MCF 10A (cell line): ENCODE measurements at regions of chr20 and their contacts with region 1.

Region 1: GRCh38 chr20:5448449-5449118 is 131.8 kb upstream of the PROKR2 start:
- DNase-seq: peak; percentile 64
- H3K4me3 Mint-ChIP-seq: no peak overlapping the region
- H3K27ac Mint-ChIP-seq: no peak overlapping the region
- H3K4me1 Mint-ChIP-seq: no peaks in the 10 kb centered on the region
- H3K27me3 Mint-ChIP-seq: peaks cover 62% of the 10 kb centered on the region
- CTCF ChIP-seq: peak; percentile 68

Region 2: GRCh38 chr20:4844751-4845465 is 603.7 kb before region 1 on chr20:
- CTCF ChIA-PET with region 1: no interaction called
- POLR2A ChIA-PET with region 1: no interaction called
- intact Hi-C with region 1: no loop called
- DNase-seq: no peak
- H3K4me3 Mint-ChIP-seq: no peak overlapping the region
- H3K27ac Mint-ChIP-seq: no peak overlapping the region
- H3K4me1 Mint-ChIP-seq: no peaks in the 10 kb centered on the region
- H3K27me3 Mint-ChIP-seq: no peaks in the 10 kb centered on the region
- CTCF ChIP-seq: no peak

Region 3: DNA sequence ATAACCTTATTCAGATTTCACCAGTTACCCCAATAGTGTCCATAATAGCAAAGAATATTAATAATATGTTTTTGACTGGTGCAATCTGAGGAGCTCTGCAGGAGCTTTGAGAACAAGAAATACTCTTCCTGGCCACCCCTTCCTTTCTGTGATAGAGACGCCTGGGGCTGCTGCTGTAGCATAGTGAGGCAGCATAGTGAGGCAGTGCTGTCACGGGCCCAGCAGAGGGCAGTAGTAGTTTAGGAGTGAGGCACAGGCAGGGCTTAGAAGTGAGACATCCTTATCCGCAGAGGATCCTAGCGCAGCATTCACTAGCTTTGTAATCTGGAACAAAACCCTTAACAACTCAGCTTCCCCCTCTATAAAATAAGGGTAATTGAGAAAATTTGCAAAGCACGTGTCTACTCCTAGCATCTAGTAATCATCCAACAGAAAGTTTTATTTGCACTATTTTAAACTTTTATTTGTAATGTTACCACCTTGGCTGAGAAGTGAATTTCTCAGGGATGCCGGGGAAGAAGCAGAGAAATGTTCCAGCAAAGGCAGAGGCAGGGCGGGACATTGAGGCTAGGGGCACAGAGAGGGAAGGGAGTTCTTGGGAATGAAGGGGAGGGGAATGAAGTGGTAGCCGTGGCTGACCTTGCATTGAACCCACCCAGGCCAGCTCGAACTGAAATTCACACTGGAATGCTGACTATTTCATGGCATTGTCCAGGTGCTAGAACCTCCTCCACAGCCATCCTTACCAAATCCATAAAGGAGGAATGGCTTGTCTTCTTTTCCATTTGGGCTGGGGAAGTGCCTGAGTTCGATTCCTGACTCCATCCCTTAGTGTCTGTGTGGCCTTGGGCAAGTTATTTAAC is 243.0 kb before region 1 on chr20:
- CTCF ChIA-PET with region 1: interaction called, 348 read pairs
- POLR2A ChIA-PET with region 1: interaction called, 8 read pairs
- intact Hi-C with region 1: loop called (anchors 1 kb)
- DNase-seq: peak; percentile 70
- H3K4me3 Mint-ChIP-seq: no peak overlapping the region
- H3K27ac Mint-ChIP-seq: no peak overlapping the region
- H3K4me1 Mint-ChIP-seq: no peaks in the 10 kb centered on the region
- H3K27me3 Mint-ChIP-seq: no peaks in the 10 kb centered on the region
- CTCF ChIP-seq: peak; percentile 88

Region 4: GRCh38 chr20:5402903-5403531 is 45.6 kb before region 1 on chr20:
- CTCF ChIA-PET with region 1: interaction called, 11 read pairs
- POLR2A ChIA-PET with region 1: no interaction called
- intact Hi-C with region 1: no loop called
- DNase-seq: peak; percentile 51
- H3K4me3 Mint-ChIP-seq: no peak overlapping the region
- H3K27ac Mint-ChIP-seq: no peak overlapping the region
- H3K4me1 Mint-ChIP-seq: no peaks in the 10 kb centered on the region
- H3K27me3 Mint-ChIP-seq: peaks cover 39% of the 10 kb centered on the region
- CTCF ChIP-seq: peak; percentile 45

Region 5: DNA sequence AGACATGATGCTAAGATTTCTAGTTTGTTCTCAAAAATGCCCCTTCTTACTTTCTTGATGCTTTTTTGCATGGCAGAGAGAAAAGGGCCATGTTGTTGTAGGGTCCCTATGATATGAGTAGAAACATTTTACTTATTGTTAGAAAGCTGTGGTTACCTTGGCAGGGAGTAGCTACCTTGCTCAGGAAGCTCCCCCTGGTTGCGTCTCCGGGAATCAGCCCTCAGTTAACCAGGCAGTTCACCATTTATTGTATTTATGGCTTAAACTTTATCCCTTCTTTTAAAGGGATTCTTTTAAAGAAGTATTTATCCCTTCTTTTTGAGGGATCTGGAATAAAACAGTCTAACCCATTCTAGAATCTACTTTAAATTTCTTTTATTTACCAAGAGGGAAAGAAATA is 17.9 kb before region 1 on chr20:
- CTCF ChIA-PET with region 1: interaction called, 50 read pairs
- POLR2A ChIA-PET with region 1: no interaction called
- intact Hi-C with region 1: no loop called
- DNase-seq: peak; percentile 4
- H3K4me3 Mint-ChIP-seq: no peak overlapping the region
- H3K27ac Mint-ChIP-seq: no peak overlapping the region
- H3K4me1 Mint-ChIP-seq: no peaks in the 10 kb centered on the region
- H3K27me3 Mint-ChIP-seq: peaks cover 83% of the 10 kb centered on the region
- CTCF ChIP-seq: no peak

Region 6: DNA sequence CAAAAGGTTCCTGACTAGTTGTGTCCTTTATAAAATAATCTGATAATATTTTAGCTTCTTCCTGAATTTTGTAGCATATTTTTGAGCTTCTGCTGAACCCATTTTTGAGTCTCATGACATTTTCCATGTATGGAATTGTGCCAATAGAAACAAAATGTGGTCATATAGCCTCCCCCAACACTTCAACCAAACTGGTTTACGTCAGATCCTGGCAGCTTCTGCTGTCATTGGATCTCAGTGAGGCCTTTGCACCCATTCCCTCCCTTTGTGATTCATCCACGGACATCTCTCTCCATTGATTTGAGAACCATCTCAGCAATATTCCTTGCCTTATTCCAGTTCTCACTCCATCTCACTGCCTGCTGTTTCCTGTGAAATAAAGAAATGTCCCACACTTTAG is 34.2 kb after region 1 on chr20:
- CTCF ChIA-PET with region 1: interaction called, 13 read pairs
- POLR2A ChIA-PET with region 1: no interaction called
- intact Hi-C with region 1: no loop called
- DNase-seq: peak; percentile 36
- H3K4me3 Mint-ChIP-seq: no peak overlapping the region
- H3K27ac Mint-ChIP-seq: no peak overlapping the region
- H3K4me1 Mint-ChIP-seq: peaks cover 7% of the 10 kb centered on the region
- H3K27me3 Mint-ChIP-seq: peaks cover 42% of the 10 kb centered on the region
- CTCF ChIP-seq: no peak